ENCODE measurements at regions of chr3 and their contacts with region 1.

Region 1: DNA sequence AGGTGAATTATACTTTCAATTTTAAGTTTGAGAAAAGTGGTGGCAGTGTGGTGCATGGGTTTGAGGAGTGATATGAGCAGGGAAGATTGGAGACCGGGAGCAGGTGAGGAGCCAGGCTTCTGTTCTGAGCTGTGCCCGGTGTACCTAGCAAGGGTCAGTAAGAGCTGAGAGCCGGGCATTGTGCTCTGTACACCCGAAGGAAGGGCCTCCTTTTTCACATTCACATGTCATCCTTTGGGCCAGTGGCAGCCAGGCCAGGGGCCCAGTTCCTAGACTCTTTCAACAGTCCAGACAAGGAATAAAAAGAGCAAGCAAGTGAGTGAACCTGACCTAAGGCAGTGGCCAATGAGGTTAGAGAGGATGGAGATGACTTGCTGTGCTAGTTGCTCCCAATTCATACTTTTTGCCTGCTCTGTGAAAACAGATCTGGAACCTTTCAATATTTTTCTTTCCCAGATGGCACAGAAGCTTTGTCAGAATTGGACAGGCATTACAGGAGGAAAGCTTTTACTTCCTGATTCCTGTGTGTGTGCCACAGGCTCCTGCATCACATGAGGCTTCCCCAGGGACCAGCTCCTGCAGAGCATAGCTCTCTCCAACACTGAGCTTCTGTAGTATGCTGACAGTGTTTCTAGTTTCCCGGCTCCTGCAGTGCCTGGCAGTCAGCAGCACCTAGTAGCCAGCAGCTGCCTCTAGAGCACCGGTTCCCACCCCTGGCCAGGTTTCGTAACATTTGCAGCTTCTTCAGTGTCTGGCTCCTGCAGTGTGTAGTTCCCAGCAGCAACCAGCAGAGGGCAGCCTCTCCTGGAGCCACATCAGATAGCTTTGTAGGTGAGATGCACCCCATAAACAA is 5.3 kb upstream of the TRA2B start:
- DNase-seq: peak; percentile 92
- ATAC-seq: peak; percentile 100
- H3K4me3 Mint-ChIP-seq: no peak overlapping the region
- H3K27ac Mint-ChIP-seq: no peak overlapping the region
- H3K4me1 Mint-ChIP-seq: peaks cover 22% of the 10 kb centered on the region
- H3K27me3 Mint-ChIP-seq: peaks cover 8% of the 10 kb centered on the region
- CTCF ChIP-seq: peak; percentile 99

Region 2: DNA sequence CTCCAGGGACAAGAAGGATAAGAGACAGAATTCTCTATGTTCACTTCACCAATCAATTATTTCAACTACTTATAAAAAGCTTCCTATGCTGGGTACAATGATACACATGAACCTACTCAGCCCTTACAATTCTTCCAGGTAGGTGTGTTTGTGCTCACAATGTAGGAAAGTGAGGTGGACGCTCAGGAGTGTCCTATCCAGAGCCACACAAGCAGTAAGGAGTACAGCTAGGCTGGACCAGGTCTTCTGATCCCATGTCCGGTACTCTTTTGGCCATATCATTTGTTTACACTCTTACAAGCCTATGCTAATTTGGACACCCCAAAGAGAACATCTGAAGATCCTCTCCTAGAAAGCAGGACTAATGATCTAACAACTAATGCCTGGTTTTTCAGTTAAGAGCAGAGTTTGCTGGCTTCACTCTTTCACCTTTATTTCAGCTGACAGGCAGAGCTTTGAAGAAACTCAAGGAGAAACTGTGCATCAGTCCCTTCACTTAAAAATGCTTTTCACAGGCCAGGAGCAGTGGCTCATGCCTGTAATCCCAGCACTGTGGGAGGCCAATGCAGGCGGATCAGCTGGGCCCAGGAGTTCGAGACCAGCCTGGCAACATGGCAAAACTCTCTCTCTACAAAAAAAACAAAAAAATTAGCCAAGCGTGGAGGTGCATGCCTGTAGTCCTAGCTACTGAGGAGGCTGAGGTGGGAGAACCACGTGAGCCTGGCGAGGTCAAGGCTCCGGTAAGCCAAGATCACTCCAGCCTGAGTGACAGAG is 145.8 kb before region 1 on chr3:
- CTCF ChIA-PET with region 1: no interaction called
- POLR2A ChIA-PET with region 1: no interaction called
- intact Hi-C with region 1: no loop called
- DNase-seq: no peak
- ATAC-seq: no peak
- H3K4me3 Mint-ChIP-seq: no peak overlapping the region
- H3K27ac Mint-ChIP-seq: no peak overlapping the region
- H3K4me1 Mint-ChIP-seq: peaks cover 7% of the 10 kb centered on the region
- H3K27me3 Mint-ChIP-seq: peaks cover 6% of the 10 kb centered on the region
- CTCF ChIP-seq: no peak

Region 3: DNA sequence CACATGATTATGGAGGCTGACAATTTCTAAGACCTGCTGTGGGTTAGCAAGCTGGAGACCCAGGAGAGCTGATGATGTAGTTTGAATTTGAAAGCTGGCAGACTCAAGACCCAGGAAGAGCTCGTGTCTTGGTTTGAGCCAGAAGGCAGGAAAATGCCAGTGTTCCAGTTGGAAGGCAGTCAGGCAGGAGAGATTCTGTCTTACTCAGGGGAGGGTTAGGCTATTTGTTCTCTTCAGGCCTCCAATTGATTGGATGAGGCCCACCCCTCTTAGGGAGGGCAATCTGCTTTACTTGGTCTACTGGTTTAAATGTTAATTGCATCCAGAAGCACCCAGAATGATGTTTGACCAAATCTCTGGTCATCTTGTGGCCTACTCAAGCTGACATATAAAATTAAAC is 77.9 kb before region 1 on chr3:
- CTCF ChIA-PET with region 1: no interaction called
- POLR2A ChIA-PET with region 1: no interaction called
- intact Hi-C with region 1: no loop called
- DNase-seq: no peak
- ATAC-seq: no peak
- H3K4me3 Mint-ChIP-seq: no peak overlapping the region
- H3K27ac Mint-ChIP-seq: no peak overlapping the region
- H3K4me1 Mint-ChIP-seq: no peaks in the 10 kb centered on the region
- H3K27me3 Mint-ChIP-seq: peaks cover 6% of the 10 kb centered on the region
- CTCF ChIP-seq: no peak

Region 4: DNA sequence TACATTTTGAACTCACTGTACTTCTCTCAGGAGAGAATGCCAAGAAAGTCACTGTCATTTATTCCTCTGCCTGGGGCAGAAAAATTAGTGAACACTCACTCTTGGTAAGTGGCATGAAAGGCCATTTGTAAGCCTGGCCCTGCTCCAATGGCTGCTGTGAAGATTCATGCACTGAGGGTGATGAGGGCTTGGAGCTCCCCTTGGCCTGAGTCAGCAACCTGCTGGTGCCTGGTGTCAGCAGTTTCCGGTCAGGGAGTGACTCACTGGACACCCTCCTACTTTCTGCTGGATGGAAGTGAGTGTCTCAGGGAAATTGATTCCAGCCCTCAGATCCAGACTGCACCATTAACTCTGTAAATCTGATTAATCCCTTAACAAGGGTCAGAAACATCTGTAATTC is 42.9 kb before region 1 on chr3:
- CTCF ChIA-PET with region 1: interaction called, 10 read pairs
- POLR2A ChIA-PET with region 1: no interaction called
- intact Hi-C with region 1: no loop called
- DNase-seq: no peak
- ATAC-seq: no peak
- H3K4me3 Mint-ChIP-seq: no peak overlapping the region
- H3K27ac Mint-ChIP-seq: no peak overlapping the region
- H3K4me1 Mint-ChIP-seq: no peaks in the 10 kb centered on the region
- H3K27me3 Mint-ChIP-seq: peaks cover 1% of the 10 kb centered on the region
- CTCF ChIP-seq: no peak

Region 5: DNA sequence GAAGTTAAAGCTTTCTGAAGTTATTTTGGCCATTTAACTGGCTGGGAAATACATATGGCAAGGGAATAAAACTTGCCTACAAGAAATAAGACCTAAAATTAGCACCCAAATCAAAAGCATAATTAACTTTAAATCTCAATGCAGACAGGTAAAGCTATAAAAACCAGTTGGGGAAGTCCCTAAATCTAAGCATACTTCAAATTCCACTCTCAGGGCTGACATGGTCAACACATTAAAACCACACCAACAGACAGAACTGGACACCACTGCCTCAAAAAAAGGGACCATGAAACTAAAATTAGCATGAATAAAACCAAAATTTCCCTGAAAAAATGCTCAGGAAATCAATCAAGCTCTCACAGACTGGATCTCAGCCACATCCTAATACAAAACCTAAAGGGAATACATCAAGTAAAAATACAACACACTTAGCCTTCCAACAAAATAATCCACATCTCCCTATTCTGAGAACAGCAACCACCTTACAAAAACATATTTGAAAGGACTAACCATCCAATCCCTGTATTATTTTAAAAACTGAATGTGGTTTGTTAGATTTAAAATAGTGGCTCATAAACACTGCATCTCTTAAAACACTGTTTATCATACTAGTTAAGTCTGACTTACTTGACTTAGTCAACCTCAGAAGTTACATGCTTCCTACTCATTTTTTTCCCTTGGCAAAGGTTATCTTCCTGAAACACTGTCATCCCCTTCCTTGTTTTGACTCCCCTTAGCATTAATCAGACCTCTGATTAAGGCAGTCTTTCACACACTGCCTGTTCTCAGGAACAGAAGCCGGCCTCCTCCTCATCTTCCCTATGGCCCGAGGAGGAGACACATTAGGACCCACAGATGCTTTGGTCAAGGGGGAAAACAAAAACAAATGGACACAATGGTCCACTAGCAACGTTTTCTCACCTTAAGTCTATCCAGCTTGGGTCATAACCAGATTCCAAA is 13.7 kb before region 1 on chr3:
- CTCF ChIA-PET with region 1: interaction called, 93 read pairs
- POLR2A ChIA-PET with region 1: interaction called, 144 read pairs
- intact Hi-C with region 1: no loop called
- DNase-seq: no peak
- ATAC-seq: no peak
- H3K4me3 Mint-ChIP-seq: peak overlapping the region; percentile 100
- H3K27ac Mint-ChIP-seq: peak overlapping the region; percentile 66
- H3K4me1 Mint-ChIP-seq: peaks cover 85% of the 10 kb centered on the region
- H3K27me3 Mint-ChIP-seq: no peaks in the 10 kb centered on the region
- CTCF ChIP-seq: no peak

Region 6: DNA sequence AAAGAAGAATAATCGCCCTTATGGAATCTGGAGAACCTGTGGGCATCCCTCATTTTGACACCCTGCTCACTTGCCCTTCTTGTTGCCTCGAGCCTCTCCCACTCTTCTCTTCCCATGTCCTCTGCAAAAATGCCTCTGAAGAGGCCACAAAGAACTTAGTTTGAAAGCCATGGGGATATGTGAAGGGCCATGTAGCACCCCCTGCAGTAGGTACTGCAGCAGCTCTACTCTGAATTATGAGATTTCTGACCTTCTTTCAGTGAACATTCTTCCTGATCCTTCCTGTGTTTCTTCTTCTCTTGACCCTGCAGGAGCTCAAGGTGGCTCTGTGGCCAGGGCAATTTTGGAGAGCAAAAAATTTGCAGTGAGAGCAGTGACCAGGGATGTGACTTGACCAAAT is 25.0 kb after region 1 on chr3:
- CTCF ChIA-PET with region 1: interaction called, 186 read pairs
- POLR2A ChIA-PET with region 1: interaction called, 5 read pairs
- intact Hi-C with region 1: no loop called
- DNase-seq: no peak
- ATAC-seq: no peak
- H3K4me3 Mint-ChIP-seq: no peak overlapping the region
- H3K27ac Mint-ChIP-seq: no peak overlapping the region
- H3K4me1 Mint-ChIP-seq: no peaks in the 10 kb centered on the region
- H3K27me3 Mint-ChIP-seq: peaks cover 3% of the 10 kb centered on the region
- CTCF ChIP-seq: no peak

Region 7: DNA sequence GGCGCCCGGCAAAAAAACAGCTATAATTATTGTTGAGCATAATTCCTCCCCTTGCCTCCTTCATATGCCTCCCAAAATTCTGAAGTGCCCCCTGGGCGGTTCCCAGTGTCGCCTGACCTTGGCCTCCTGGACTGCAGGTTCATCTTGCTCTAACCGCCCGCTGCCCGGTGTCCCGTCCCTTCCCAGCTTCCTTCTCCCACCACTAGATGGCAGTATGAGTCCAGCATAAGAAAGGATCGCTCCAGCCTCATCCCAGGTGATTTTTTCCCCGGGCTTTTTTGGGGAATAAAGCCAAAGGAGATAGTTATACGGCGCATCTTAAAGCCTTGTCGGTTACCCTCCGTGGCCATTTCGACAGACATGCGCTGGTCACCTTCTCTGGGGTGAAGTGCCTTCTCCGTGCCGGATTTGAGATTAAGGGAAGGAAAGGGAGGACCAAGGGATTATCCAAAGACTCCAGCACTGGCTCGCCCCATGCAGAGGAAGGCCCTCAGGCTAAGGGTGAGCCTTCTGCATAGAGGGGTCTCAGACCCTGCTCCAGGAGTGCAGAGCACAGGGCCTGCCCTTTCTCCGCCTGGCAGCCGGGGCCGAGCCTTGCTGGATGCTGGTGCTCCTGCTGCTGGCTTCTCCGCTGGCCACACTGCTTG is 40.5 kb after region 1 on chr3:
- CTCF ChIA-PET with region 1: interaction called, 46 read pairs
- POLR2A ChIA-PET with region 1: no interaction called
- intact Hi-C with region 1: no loop called
- DNase-seq: peak; percentile 66
- ATAC-seq: peak; percentile 77
- H3K4me3 Mint-ChIP-seq: no peak overlapping the region
- H3K27ac Mint-ChIP-seq: no peak overlapping the region
- H3K4me1 Mint-ChIP-seq: peaks cover 6% of the 10 kb centered on the region
- H3K27me3 Mint-ChIP-seq: peaks cover 6% of the 10 kb centered on the region
- CTCF ChIP-seq: peak; percentile 98

Region 8: GRCh38 chr3:186259612-186260383 is 316.7 kb after region 1 on chr3:
- CTCF ChIA-PET with region 1: interaction called, 14 read pairs
- POLR2A ChIA-PET with region 1: interaction called, 5 read pairs
- intact Hi-C with region 1: no loop called
- DNase-seq: peak; percentile 78
- ATAC-seq: peak; percentile 88
- H3K4me3 Mint-ChIP-seq: peak overlapping the region; percentile 15
- H3K27ac Mint-ChIP-seq: peak overlapping the region; percentile 56
- H3K4me1 Mint-ChIP-seq: peaks cover 20% of the 10 kb centered on the region
- H3K27me3 Mint-ChIP-seq: peaks cover 2% of the 10 kb centered on the region
- CTCF ChIP-seq: peak; percentile 71

Region 9: GRCh38 chr3:186783073-186783730 is 840.1 kb after region 1 on chr3 and contains the start of gene EIF4A2:
- CTCF ChIA-PET with region 1: no interaction called
- POLR2A ChIA-PET with region 1: interaction called, 85 read pairs
- intact Hi-C with region 1: loop called (anchors 5 kb)
- DNase-seq: peak; percentile 91
- ATAC-seq: peak; percentile 78
- H3K4me3 Mint-ChIP-seq: peak within 1 kb of the TSS; percentile 97
- H3K27ac Mint-ChIP-seq: peak within 1 kb of the TSS; percentile 99
- H3K4me1 Mint-ChIP-seq: peaks cover 30% of the 10 kb centered on the region
- H3K27me3 Mint-ChIP-seq: no peaks in the 10 kb centered on the region
- CTCF ChIP-seq: no peak
- total RNA-seq, gene EIF4A2: 450 to 466 TPM

Measured in activated CD8-positive, alpha-beta T cell treated with anti-CD3 and anti-CD28 coated beads for 36 hours (primary cell).